ENCODE measurements at regions of chr5 and their contacts with region 1.

Region 1: GRCh38 chr5:56900858-56901578 is 8.4 kb upstream of the SETD9 start:
- DNase-seq: no peak
- H3K4me3 ChIP-seq: no peak overlapping the region
- H3K27me3 ChIP-seq: no peaks in the 10 kb centered on the region
- CTCF ChIP-seq: peak; percentile 64

Region 2: GRCh38 chr5:56649569-56649968 is 251.4 kb before region 1 on chr5:
- CTCF ChIA-PET with region 1: no interaction called
- POLR2A ChIA-PET with region 1: no interaction called
- DNase-seq: no peak
- H3K4me3 ChIP-seq: no peak overlapping the region
- H3K27me3 ChIP-seq: peaks cover 2% of the 10 kb centered on the region; the same call in 1 of the 2 replicates
- CTCF ChIP-seq: no peak

Region 3: DNA sequence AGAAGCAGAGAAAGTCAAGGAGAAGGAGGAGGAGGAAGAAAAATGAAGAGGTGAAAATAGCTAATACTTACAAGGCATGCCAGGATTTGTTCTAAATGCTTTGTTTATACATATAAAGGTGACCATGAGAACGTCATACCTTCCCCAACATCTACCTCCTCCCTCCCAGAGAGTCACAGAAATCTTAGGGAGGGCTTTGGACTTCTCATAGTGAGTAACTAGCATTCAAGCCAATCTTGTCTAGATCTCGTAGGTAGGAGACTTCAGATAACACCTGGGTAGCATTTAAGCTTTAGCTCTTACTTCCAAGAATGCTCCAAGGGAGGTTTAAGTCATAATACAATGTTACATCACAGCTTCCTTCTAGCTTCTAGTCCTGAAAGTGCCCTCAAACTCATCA is 236.4 kb after region 1 on chr5:
- CTCF ChIA-PET with region 1: interaction called, 37 read pairs
- POLR2A ChIA-PET with region 1: no interaction called
- DNase-seq: no peak
- H3K4me3 ChIP-seq: no peak overlapping the region
- H3K27me3 ChIP-seq: no peaks in the 10 kb centered on the region
- CTCF ChIP-seq: no peak

Region 4: DNA sequence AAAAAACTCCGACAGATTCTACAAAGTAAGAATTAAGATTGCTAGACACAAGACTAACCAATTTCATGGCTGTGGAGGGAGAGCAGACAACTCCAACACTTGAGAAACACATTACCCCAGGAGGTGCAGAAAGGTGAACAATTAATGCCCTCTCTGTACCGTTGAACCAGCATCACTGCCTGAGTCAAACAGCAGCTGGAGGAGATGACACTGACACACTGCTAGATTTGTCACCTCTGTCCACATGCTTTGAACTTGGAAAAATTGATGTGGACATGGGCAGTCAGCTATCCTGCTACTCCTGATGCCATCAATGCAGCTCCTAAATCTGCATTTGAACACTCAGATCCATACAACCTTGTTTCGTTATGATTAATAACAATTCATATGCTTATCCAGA is 324.5 kb after region 1 on chr5:
- CTCF ChIA-PET with region 1: interaction called, 10 read pairs
- POLR2A ChIA-PET with region 1: no interaction called
- DNase-seq: no peak
- H3K4me3 ChIP-seq: no peak overlapping the region
- H3K27me3 ChIP-seq: no peaks in the 10 kb centered on the region
- CTCF ChIP-seq: no peak

Measured in BJ (cell line).